ENCODE measurements at regions of chr9 and their contacts with region 1.

Region 1: GRCh38 chr9:98255578-98256296 is at the start of gene TBC1D2:
- DNase-seq: peak; percentile 96 to 99 (median 97)
- ATAC-seq: peak; percentile 92
- H3K4me3 ChIP-seq: peak within 1 kb of the TSS; percentile 90 to 94
- H3K4me3 Mint-ChIP-seq: peak within 1 kb of the TSS; percentile 93
- H3K27ac ChIP-seq: peak within 1 kb of the TSS; percentile 82 to 88
- H3K27ac Mint-ChIP-seq: peak within 1 kb of the TSS; percentile 94
- H3K4me1 ChIP-seq: peaks cover 20% of the 10 kb centered on the region
- H3K4me1 Mint-ChIP-seq: peaks cover 33% of the 10 kb centered on the region
- H3K27me3 ChIP-seq: no peaks in the 10 kb centered on the region
- H3K27me3 Mint-ChIP-seq: no peaks in the 10 kb centered on the region
- CTCF ChIP-seq: peak; percentile 13
- total RNA-seq, gene TBC1D2: 1.9 to 2.6 TPM

Region 2: GRCh38 chr9:97632985-97633858 is 622.5 kb before region 1 on chr9 and contains the starts of genes NCBP1 and TSTD2:
- CTCF ChIA-PET with region 1: no interaction called
- POLR2A ChIA-PET with region 1: interaction called, 5 read pairs
- intact Hi-C with region 1: loop called in 1 of 2 experiments (anchors 1 kb)
- DNase-seq: peak; percentile 89 to 98 (median 95)
- ATAC-seq: peak; percentile 86
- H3K4me3 ChIP-seq: peak within 1 kb of the TSS; percentile 96 to 97
- H3K4me3 Mint-ChIP-seq: peak within 1 kb of the TSS; percentile 96
- H3K27ac ChIP-seq: peak within 1 kb of the TSS; percentile 88 to 97
- H3K27ac Mint-ChIP-seq: peak within 1 kb of the TSS; percentile 99
- H3K4me1 ChIP-seq: peaks cover 45% of the 10 kb centered on the region
- H3K4me1 Mint-ChIP-seq: peaks cover 57% of the 10 kb centered on the region
- H3K27me3 ChIP-seq: no peaks in the 10 kb centered on the region
- H3K27me3 Mint-ChIP-seq: no peaks in the 10 kb centered on the region
- CTCF ChIP-seq: no peak
- total RNA-seq, gene NCBP1: 50.7 to 58.5 TPM
- total RNA-seq, gene TSTD2: 34.3 to 40.8 TPM

Region 3: GRCh38 chr9:97906236-97906831 is 349.4 kb before region 1 on chr9:
- CTCF ChIA-PET with region 1: interaction called, 3 read pairs
- POLR2A ChIA-PET with region 1: interaction called, 4 read pairs
- intact Hi-C with region 1: loop called in 1 of 2 experiments (anchors 5 kb)
- DNase-seq: peak in 4 of 9 experiments; percentile 56 to 78 (median 68)
- ATAC-seq: peak; percentile 26
- H3K4me3 ChIP-seq: peak overlapping the region; percentile 4 to 34
- H3K4me3 Mint-ChIP-seq: peak overlapping the region; percentile 80
- H3K27ac ChIP-seq: peak overlapping the region; percentile 54 to 79
- H3K27ac Mint-ChIP-seq: peak overlapping the region; percentile 97
- H3K4me1 ChIP-seq: peaks cover 92% of the 10 kb centered on the region
- H3K4me1 Mint-ChIP-seq: peaks cover 88% of the 10 kb centered on the region
- H3K27me3 ChIP-seq: no peaks in the 10 kb centered on the region
- H3K27me3 Mint-ChIP-seq: no peaks in the 10 kb centered on the region
- CTCF ChIP-seq: no peak

Region 4: GRCh38 chr9:98056269-98057137 is 199.2 kb before region 1 on chr9 and contains the start of gene NANS:
- CTCF ChIA-PET with region 1: interaction called, 3 read pairs
- POLR2A ChIA-PET with region 1: interaction called, 25 read pairs
- intact Hi-C with region 1: loop called in 1 of 2 experiments (anchors 1 kb)
- DNase-seq: peak; percentile 78 to 93 (median 93)
- ATAC-seq: peak; percentile 94
- H3K4me3 ChIP-seq: peak within 1 kb of the TSS; percentile 58 to 83
- H3K4me3 Mint-ChIP-seq: peak within 1 kb of the TSS; percentile 96
- H3K27ac ChIP-seq: peak within 1 kb of the TSS; percentile 81 to 83
- H3K27ac Mint-ChIP-seq: peak within 1 kb of the TSS; percentile 97
- H3K4me1 ChIP-seq: peaks cover 21% of the 10 kb centered on the region
- H3K4me1 Mint-ChIP-seq: peaks cover 24% of the 10 kb centered on the region
- H3K27me3 ChIP-seq: no peaks in the 10 kb centered on the region
- H3K27me3 Mint-ChIP-seq: no peaks in the 10 kb centered on the region
- CTCF ChIP-seq: no peak
- total RNA-seq, gene NANS: 84.6 to 92.5 TPM

Region 5: GRCh38 chr9:98118640-98119601 is 136.8 kb before region 1 on chr9 and contains the start of gene TRIM14:
- CTCF ChIA-PET with region 1: interaction called, 17 read pairs
- POLR2A ChIA-PET with region 1: interaction called, 23 read pairs
- intact Hi-C with region 1: loop called in 1 of 2 experiments (anchors 1 kb)
- DNase-seq: peak in 8 of 9 experiments; percentile 31 to 77 (median 60)
- ATAC-seq: peak; percentile 51
- H3K4me3 ChIP-seq: peak within 1 kb of the TSS; percentile 56 to 72
- H3K4me3 Mint-ChIP-seq: peak within 1 kb of the TSS; percentile 86
- H3K27ac ChIP-seq: peak within 1 kb of the TSS; percentile 71 to 92
- H3K27ac Mint-ChIP-seq: peak within 1 kb of the TSS; percentile 97
- H3K4me1 ChIP-seq: peaks cover 48% of the 10 kb centered on the region
- H3K4me1 Mint-ChIP-seq: peaks cover 54% of the 10 kb centered on the region
- H3K27me3 ChIP-seq: no peaks in the 10 kb centered on the region
- H3K27me3 Mint-ChIP-seq: no peaks in the 10 kb centered on the region
- CTCF ChIP-seq: no peak
- total RNA-seq, gene TRIM14: 22.6 to 23.5 TPM

Region 6: GRCh38 chr9:98215821-98216220 is 39.9 kb before region 1 on chr9:
- CTCF ChIA-PET with region 1: no interaction called
- POLR2A ChIA-PET with region 1: no interaction called
- intact Hi-C with region 1: no loop called
- DNase-seq: peak in 4 of 9 experiments; percentile 21 to 56 (median 32)
- ATAC-seq: no peak
- H3K4me3 ChIP-seq: no peak overlapping the region
- H3K4me3 Mint-ChIP-seq: no peak overlapping the region
- H3K27ac ChIP-seq: no peak overlapping the region
- H3K27ac Mint-ChIP-seq: no peak overlapping the region
- H3K4me1 ChIP-seq: no peaks in the 10 kb centered on the region
- H3K4me1 Mint-ChIP-seq: no peaks in the 10 kb centered on the region
- H3K27me3 ChIP-seq: no peaks in the 10 kb centered on the region
- H3K27me3 Mint-ChIP-seq: no peaks in the 10 kb centered on the region
- CTCF ChIP-seq: no peak

Region 7: DNA sequence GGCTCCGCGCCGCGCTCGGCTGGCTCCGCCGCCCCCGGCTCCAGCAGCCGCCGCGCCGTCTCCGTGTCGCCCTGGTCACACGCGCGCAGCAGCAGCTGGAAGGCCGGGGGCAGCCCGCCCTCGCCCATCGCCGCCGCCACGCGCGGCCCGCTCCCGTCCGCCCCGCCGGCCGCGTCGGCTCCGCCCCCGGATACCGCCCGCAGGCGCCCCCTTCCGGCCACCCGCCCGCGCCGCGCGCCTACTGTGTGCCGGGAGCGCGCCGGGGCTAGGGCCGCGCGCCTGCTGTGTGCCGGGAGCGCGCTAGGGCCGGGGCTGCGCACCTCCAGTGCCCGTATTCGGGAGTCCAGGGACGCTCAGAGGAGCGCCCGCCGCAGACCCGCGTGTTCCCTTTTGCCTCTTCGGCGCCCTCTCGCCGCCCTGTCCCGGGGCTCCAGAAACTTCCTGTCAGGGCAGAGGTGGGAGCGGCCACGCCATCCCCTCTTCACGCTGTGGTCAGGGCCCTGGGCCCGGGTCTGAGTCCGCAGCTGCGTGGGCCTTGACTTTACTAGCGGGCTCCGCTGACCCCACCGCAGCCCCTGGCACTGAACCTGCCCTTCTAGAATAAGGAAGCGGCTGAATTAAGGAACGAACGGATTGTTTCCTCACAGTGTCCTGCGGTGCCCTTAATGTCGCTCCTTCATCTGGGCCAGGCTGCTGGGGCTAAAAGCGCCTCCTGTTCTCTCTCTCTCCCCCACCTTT is 540.8 kb after region 1 on chr9 and contains the start of gene ANKS6:
- CTCF ChIA-PET with region 1: no interaction called
- POLR2A ChIA-PET with region 1: no interaction called
- intact Hi-C with region 1: loop called in 1 of 2 experiments (anchors 5 kb)
- DNase-seq: peak; percentile 63 to 91 (median 85)
- ATAC-seq: peak; percentile 92
- H3K4me3 ChIP-seq: peak within 1 kb of the TSS; percentile 77 to 95
- H3K4me3 Mint-ChIP-seq: peak within 1 kb of the TSS; percentile 88
- H3K27ac ChIP-seq: peak within 1 kb of the TSS; percentile 61 to 66
- H3K27ac Mint-ChIP-seq: peak within 1 kb of the TSS; percentile 85
- H3K4me1 ChIP-seq: peaks cover 15% of the 10 kb centered on the region
- H3K4me1 Mint-ChIP-seq: peaks cover 32% of the 10 kb centered on the region
- H3K27me3 ChIP-seq: no peaks in the 10 kb centered on the region
- H3K27me3 Mint-ChIP-seq: no peaks in the 10 kb centered on the region
- CTCF ChIP-seq: peak; percentile 28
- total RNA-seq, gene ANKS6: 10.6 to 12.7 TPM

Measured in CD8-positive, alpha-beta T cell (primary cell).